ENCODE measurements at regions of chr5 and their contacts with region 1.

Region 1: DNA sequence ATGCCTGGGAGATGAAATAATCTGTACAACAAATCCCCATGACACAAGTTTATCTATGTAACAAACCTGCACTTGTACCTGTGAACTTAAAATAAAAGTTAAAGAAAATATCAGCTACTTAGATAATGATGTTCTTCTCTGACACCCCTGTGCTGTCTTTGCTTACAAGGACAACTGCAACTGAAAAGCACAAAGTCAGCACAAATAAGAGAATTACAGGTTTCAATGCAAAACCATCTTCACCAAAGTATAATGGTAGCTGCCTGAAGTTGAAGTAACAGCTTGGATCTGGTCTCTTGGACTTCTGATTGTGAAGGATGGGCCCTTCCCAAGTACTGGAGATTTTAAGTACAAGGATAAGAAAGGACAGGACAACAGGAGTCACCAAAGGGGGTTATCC is 45.6 kb upstream of the PPP2R2B start:
- DNase-seq: no peak
- ATAC-seq: no peak
- H3K4me3 ChIP-seq: no peak overlapping the region
- H3K27ac ChIP-seq: no peak overlapping the region
- H3K4me1 ChIP-seq: no peaks in the 10 kb centered on the region
- H3K27me3 ChIP-seq: no peaks in the 10 kb centered on the region
- CTCF ChIP-seq: no peak

Region 2: GRCh38 chr5:146098047-146098446 is 826.1 kb before region 1 on chr5:
- intact Hi-C with region 1: no loop called
- DNase-seq: no peak
- ATAC-seq: no peak
- H3K4me3 ChIP-seq: no peak overlapping the region
- H3K27ac ChIP-seq: no peak overlapping the region
- H3K4me1 ChIP-seq: no peaks in the 10 kb centered on the region
- H3K27me3 ChIP-seq: no peaks in the 10 kb centered on the region
- CTCF ChIP-seq: no peak

Region 3: DNA sequence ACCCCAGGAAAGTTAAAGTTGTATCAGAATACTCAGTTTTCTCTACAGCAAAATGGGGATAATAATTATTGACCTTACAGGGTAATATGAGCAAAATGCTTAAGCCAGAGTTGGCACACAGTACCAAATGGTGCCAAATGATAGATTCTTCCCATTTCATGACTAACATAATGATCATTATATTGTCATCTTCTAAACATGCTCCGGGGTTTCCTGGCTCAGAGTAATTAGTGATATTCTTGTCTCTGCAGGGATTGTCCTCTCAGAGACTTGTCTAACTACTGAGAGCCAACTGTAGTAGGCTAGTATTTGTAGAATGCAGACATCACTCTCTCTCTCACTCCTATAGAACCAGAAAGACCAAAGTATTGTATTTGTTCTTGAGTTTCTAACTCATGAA is 20.3 kb before region 1 on chr5:
- intact Hi-C with region 1: loop called in 1 of 2 experiments (anchors 2 kb)
- DNase-seq: no peak
- ATAC-seq: no peak
- H3K4me3 ChIP-seq: no peak overlapping the region
- H3K27ac ChIP-seq: no peak overlapping the region
- H3K4me1 ChIP-seq: no peaks in the 10 kb centered on the region
- H3K27me3 ChIP-seq: no peaks in the 10 kb centered on the region
- CTCF ChIP-seq: no peak

Measured in psoas muscle (tissue), 8 donors.